Gastrocnemius medialis (tissue), 4 donors: ENCODE measurements at regions of chr10 and their contacts with region 1.

Region 1: GRCh38 chr10:74081192-74081803 is 69.3 kb downstream of the AP3M1 start:
- DNase-seq: peak in 1 of 2 donors; percentile 35
- ATAC-seq: peak; percentile 45 to 66
- H3K4me3 ChIP-seq: no peak overlapping the region
- H3K27ac ChIP-seq: peak overlapping the region; percentile 9 to 71 (median 50)
- H3K4me1 ChIP-seq: peaks cover 11 to 24% of the 10 kb centered on the region in 2 donors
- H3K27me3 ChIP-seq: no peaks in the 10 kb centered on the region
- CTCF ChIP-seq: peak; percentile 55 to 77 (median 72)
- POLR2A ChIP-seq: no peak

Region 2: DNA sequence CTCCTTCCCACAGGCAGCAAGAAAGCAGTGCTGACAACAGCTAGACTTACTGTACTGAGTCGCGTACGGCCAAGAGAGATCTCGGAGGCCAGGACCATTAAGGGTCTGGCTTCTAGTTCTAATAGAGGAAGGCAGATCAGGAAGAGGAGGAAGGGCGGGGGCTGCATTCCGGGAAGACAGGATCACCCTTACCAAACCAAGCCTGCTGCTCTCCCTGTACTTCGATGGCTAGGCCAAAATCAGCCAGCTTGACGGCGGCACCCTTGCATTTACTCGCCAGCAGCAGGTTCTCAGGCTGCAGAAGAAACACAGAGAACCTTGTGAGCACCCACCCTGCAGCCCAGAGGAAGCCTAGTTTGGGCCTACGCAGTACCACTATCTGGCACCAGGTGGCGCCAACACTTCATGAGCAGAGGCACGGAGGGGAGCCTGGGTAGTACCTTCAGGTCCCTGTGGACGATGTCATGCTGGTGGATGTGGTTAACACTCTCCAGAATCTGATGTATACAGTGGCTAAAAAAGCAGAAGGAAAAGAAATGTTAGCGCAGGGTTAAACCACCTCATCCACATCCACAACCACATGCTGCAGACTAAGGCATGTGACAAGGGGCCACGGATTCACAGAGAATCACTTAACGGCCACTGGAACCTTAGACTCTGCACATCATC is 232.3 kb before region 1 on chr10:
- in situ Hi-C with region 1: no loop called
- intact Hi-C with region 1: loop called (anchors 5 kb)
- DNase-seq: peak; percentile 58 to 74
- ATAC-seq: peak; percentile 82 to 85
- H3K4me3 ChIP-seq: no peak overlapping the region
- H3K27ac ChIP-seq: peak overlapping the region; percentile 43 to 73 (median 44)
- H3K4me1 ChIP-seq: peaks cover 11 to 16% of the 10 kb centered on the region in 2 donors
- H3K27me3 ChIP-seq: no peaks in the 10 kb centered on the region
- CTCF ChIP-seq: peak; percentile 99 to 100 (median 100)
- POLR2A ChIP-seq: no peak

Region 3: DNA sequence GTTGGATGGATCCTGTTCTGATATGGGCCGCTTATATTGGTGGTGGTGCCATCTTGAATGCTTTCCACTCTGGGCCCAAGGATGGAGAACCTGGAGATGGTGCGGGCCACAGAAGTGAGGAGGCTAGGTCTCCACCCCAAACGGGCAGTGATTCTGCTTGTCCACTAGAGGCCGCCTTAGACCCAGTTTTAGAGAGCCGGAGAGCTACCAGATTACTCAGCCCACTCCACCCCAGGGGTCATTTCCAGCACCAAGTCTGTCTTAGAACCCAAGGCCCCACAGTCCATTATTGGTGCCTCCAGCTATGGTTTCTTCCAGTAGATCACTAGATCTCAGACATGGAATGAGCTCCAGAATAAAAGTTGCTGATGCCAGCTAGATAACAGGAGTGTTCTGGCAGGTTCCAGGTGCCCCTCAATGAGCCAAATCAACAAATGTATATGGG is 195.2 kb before region 1 on chr10:
- in situ Hi-C with region 1: loop called (anchors 5 to 10 kb)
- intact Hi-C with region 1: loop called (anchors 1 kb)
- DNase-seq: peak; percentile 61 to 74
- ATAC-seq: peak; percentile 66 to 75
- H3K4me3 ChIP-seq: no peak overlapping the region
- H3K27ac ChIP-seq: peak overlapping the region; percentile 68 to 92 (median 85)
- H3K4me1 ChIP-seq: peaks cover 30 to 35% of the 10 kb centered on the region in 2 donors
- H3K27me3 ChIP-seq: no peaks in the 10 kb centered on the region
- CTCF ChIP-seq: peak; percentile 86 to 92 (median 88)
- POLR2A ChIP-seq: no peak

Region 4: DNA sequence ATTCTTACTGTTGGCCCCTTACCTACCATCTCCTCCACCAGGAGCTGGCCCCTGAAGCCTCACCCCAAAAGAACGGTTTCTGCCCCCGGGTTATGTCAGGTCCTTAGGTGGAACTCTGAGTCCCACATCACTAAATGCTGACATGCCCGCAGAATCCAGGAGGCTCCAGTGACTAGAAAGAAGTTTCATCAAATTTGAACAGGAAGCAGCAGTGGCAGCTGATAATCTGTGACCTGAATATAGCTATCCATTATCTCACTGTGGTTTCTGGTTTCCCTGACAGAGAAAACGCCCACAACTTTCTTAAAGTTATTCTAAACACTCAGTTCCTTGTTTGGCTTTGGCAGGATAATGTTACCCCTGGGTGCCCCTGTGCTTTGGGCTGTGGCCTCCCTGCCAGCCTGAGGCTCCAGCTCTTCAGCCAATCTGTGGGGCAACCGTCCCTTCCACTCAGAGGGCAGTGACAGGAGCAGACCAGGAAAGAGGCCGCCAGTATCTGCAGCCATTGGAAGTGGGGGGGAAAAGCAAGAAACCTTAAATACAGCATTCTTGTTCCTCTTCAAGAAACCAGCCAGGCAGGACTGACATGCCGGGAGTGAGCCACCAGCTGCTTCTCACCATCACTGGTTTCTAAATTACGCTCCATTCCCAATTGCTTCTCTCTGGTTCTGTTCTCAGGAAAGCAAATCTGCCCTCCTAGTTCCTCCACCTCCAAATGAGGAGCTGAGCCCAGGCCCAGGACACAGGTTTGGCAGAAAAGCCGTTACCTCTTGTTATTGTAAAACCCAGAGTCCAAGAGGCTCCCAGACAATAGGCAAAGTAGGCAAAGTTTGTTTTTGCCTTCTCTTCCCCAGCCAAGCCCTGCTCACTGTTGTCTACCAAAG is 124.6 kb before region 1 on chr10:
- in situ Hi-C with region 1: loop called in 1 of 4 experiments (anchors 10 kb)
- intact Hi-C with region 1: loop called (anchors 5 kb)
- DNase-seq: peak in 1 of 2 donors; percentile 27
- ATAC-seq: peak; percentile 43 to 69
- H3K4me3 ChIP-seq: no peak overlapping the region
- H3K27ac ChIP-seq: peak overlapping the region; percentile 41 to 76 (median 64)
- H3K4me1 ChIP-seq: peaks cover 10 to 11% of the 10 kb centered on the region in 2 donors
- H3K27me3 ChIP-seq: no peaks in the 10 kb centered on the region
- CTCF ChIP-seq: no peak
- POLR2A ChIP-seq: no peak

Region 5: DNA sequence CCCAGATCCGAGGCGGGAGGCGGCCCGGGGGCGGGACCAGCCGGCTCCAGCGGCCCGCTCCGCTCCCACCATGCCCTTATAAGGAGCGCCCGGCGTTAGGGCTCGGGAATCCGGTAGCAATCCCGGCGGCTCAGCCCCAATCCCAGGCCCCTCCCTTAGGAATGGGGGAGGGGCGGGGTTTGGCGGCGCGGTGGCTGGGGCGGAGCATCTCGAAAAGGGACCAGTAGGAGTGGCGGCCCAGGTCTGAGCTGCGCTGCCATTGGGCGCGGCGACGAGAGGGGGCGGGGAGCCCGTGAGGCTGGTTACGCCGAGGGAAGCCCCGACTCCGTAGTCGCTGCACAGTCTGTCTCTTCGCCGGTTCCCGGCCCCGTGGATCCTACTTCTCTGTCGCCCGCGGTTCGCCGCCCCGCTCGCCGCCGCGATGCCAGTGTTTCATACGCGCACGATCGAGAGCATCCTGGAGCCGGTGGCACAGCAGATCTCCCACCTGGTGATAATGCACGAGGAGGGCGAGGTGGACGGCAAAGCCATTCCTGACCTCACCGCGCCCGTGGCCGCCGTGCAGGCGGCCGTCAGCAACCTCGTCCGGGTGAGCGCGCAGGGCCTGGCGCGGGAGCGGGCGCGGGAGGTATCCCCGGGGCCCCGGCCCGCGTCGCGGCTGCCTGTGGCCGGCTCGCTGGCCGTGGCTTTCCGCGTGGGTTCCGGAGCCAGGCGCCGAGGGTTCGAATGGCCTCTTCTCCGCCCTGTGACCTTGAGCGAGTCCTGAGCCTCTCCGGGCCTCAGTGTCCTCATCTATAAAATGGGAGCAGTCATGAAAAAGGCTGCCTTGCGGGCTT is 83.3 kb before region 1 on chr10 and contains the start of gene VCL:
- in situ Hi-C with region 1: no loop called
- intact Hi-C with region 1: loop called (anchors 5 kb)
- DNase-seq: peak; percentile 98 to 99
- ATAC-seq: peak; percentile 90
- H3K4me3 ChIP-seq: peak within 1 kb of the TSS; percentile 77 to 88 (median 86)
- H3K27ac ChIP-seq: peak within 1 kb of the TSS; percentile 86 to 97 (median 92)
- H3K4me1 ChIP-seq: peaks cover 32 to 35% of the 10 kb centered on the region in 2 donors
- H3K27me3 ChIP-seq: no peaks in the 10 kb centered on the region
- CTCF ChIP-seq: no peak
- POLR2A ChIP-seq: peak; percentile 97 to 99
- total RNA-seq, gene VCL: 129 to 299 (median 210) TPM

Region 6: GRCh38 chr10:74058658-74059057 is 22.6 kb before region 1 on chr10:
- in situ Hi-C with region 1: no loop called
- intact Hi-C with region 1: no loop called
- DNase-seq: no peak
- ATAC-seq: peak; percentile 22 to 49
- H3K4me3 ChIP-seq: no peak overlapping the region
- H3K27ac ChIP-seq: peak overlapping the region; percentile 93 to 97 (median 95)
- H3K4me1 ChIP-seq: peaks cover 47 to 59% of the 10 kb centered on the region in 2 donors
- H3K27me3 ChIP-seq: no peaks in the 10 kb centered on the region
- CTCF ChIP-seq: no peak
- POLR2A ChIP-seq: no peak